Naive thymus-derived CD4-positive, alpha-beta T cell (primary cell): ENCODE measurements at regions of chr1 and their contacts with region 1.

Region 1: DNA sequence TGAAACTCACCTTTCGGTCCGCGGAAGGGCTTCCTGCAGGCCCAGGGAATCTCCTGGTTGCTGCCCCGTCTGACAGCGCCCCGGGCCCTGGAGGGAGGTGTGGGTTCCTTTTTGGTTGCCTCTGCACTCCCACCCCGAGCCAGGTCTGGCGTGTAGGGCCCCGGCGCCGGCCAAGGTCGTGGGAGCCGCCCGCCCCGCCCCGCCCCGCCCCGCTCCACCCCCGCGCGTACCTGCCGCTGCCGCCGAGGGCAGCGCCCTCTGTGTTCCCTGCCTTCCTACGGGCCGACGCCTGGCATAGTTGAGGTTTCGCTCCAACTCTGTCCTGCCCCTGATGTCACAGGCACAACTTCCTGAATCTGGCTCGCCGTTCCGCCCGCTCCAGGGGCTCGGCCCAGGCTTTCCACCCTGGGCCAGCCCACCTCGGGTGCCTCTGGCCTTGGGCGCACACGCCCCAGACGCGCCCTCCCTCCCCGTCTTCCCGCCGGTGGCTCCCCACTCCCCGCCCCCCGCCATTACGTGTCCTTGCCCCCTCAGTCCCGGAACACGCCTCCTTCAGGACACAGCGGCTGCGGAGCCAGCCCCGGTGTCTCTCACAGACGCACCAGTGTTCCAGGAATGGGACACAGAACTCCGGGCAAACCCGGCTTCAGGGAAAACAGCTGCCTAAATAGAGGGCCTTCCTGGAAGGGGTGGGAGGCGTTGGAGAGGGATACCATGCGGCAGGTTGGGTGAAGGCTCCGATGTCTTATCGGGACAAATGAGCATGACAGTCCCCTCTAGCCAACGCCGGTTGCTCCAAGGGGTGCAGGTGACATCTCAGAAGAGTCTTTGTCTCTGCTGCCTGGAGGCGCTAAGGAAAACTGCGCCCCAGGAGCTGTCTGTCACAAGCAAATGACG is at the start of gene KIAA0040:
- DNase-seq: peak; percentile 25 to 66 (median 40)
- ATAC-seq: peak; percentile 78
- H3K4me3 ChIP-seq: peak within 1 kb of the TSS; percentile 90
- H3K4me3 Mint-ChIP-seq: peak within 1 kb of the TSS; percentile 89 to 100 (median 97)
- H3K27ac ChIP-seq: peak within 1 kb of the TSS; percentile 80
- H3K27ac Mint-ChIP-seq: peak within 1 kb of the TSS; percentile 73 to 97 (median 92)
- H3K4me1 ChIP-seq: peaks cover 38 to 43% of the 10 kb centered on the region in 2 donors
- H3K4me1 Mint-ChIP-seq: peaks cover 40 to 67% (median 53%) of the 10 kb centered on the region in 7 donors
- H3K27me3 ChIP-seq: no peaks in the 10 kb centered on the region
- H3K27me3 Mint-ChIP-seq: no peaks in the 10 kb centered on the region
- total RNA-seq, gene KIAA0040: 21.7 to 88.1 (median 27.0) TPM

Region 2: GRCh38 chr1:174682419-174683008 is 510.4 kb before region 1 on chr1:
- CTCF ChIA-PET with region 1: no interaction called
- POLR2A ChIA-PET with region 1: no interaction called
- intact Hi-C with region 1: no loop called
- DNase-seq: no peak
- ATAC-seq: no peak
- H3K4me3 ChIP-seq: no peak overlapping the region
- H3K4me3 Mint-ChIP-seq: no peak overlapping the region
- H3K27ac ChIP-seq: no peak overlapping the region
- H3K27ac Mint-ChIP-seq: no peak overlapping the region
- H3K4me1 ChIP-seq: no peaks in the 10 kb centered on the region
- H3K4me1 Mint-ChIP-seq: peaks cover 0 to 4% (median 0%) of the 10 kb centered on the region in 7 donors
- H3K27me3 ChIP-seq: no peaks in the 10 kb centered on the region
- H3K27me3 Mint-ChIP-seq: no peaks in the 10 kb centered on the region

Region 3: DNA sequence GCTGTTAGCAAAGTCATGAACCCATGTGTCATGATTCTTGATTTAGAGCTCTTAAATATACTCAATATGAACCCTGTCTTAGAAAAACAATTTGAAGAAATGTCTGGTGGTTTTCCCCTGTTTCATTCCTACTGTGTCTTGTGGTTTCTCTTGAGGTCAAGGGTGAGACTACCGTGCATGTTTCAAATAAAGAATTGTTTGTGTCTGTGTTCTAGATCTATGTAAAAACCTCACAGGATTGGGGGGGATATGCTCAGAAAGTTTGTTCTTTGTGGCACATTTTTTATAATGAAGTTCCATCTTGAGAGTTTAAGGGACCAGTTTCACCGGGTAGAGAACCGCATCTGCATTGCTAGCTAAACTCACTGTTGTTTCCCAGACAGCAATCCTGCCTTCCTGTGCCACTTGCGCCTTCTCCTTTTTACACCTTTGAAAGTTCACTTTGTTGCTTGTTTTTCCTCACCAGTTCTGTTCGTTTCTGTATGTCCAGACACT is 224.1 kb before region 1 on chr1:
- CTCF ChIA-PET with region 1: no interaction called
- POLR2A ChIA-PET with region 1: interaction called, 6 read pairs
- intact Hi-C with region 1: loop called in 1 of 2 experiments (anchors 10 kb)
- DNase-seq: peak in 7 of 9 donors; percentile 74 to 90 (median 85)
- ATAC-seq: peak; percentile 75
- H3K4me3 ChIP-seq: peak overlapping the region; percentile 18
- H3K4me3 Mint-ChIP-seq: peak overlapping the region; percentile 56 to 86 (median 74)
- H3K27ac ChIP-seq: peak overlapping the region; percentile 71
- H3K27ac Mint-ChIP-seq: peak overlapping the region; percentile 87 to 97 (median 92)
- H3K4me1 ChIP-seq: peaks cover 69 to 76% of the 10 kb centered on the region in 2 donors
- H3K4me1 Mint-ChIP-seq: peaks cover 43 to 87% (median 74%) of the 10 kb centered on the region in 7 donors
- H3K27me3 ChIP-seq: no peaks in the 10 kb centered on the region
- H3K27me3 Mint-ChIP-seq: no peaks in the 10 kb centered on the region

Region 4: DNA sequence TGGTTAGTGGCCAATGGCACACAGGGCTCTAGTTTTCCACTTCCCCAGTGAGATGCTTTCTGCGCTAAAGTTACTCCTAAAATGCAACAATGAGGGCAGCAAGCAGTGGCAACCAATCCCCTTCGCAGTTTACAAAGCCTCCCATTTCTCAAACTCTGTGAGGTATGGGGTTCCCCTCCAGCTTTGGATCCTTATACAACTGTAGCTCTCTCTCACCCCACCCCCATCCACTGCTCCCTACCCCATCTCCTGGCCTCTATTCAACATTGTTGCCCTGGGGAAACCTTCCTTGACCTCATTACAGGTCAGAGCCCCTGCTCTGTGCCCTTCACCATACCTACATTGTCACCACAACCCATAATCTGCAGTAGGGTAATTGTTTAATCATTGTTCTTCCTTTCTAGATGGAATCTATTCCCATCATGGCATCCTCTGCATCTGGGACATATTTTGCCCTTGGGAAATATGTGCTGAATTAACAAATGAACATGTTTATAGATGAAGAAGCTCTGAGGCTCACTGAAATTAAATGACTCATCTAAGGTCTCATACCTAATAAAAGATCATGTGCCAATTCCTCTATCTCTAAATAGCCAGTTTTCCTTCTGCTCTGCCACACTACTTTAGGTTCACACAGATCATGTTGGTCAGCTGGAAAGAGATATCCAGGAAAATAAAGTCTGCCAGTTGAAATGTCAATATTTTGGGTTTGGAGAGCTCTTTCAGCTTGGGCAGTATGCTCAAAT is 12.9 kb before region 1 on chr1:
- CTCF ChIA-PET with region 1: interaction called, 5 read pairs
- POLR2A ChIA-PET with region 1: interaction called, 5 read pairs
- intact Hi-C with region 1: loop called in 1 of 2 experiments (anchors 1 kb)
- DNase-seq: no peak
- ATAC-seq: no peak
- H3K4me3 ChIP-seq: no peak overlapping the region
- H3K4me3 Mint-ChIP-seq: peak overlapping the region in 2 of 10 donors; percentile 12 to 42
- H3K27ac ChIP-seq: no peak overlapping the region
- H3K27ac Mint-ChIP-seq: peak overlapping the region in 5 of 9 donors; percentile 18 to 71 (median 62)
- H3K4me1 ChIP-seq: peaks cover 20 to 37% of the 10 kb centered on the region in 2 donors
- H3K4me1 Mint-ChIP-seq: peaks cover 46 to 88% (median 85%) of the 10 kb centered on the region in 7 donors
- H3K27me3 ChIP-seq: no peaks in the 10 kb centered on the region
- H3K27me3 Mint-ChIP-seq: no peaks in the 10 kb centered on the region

Region 5: DNA sequence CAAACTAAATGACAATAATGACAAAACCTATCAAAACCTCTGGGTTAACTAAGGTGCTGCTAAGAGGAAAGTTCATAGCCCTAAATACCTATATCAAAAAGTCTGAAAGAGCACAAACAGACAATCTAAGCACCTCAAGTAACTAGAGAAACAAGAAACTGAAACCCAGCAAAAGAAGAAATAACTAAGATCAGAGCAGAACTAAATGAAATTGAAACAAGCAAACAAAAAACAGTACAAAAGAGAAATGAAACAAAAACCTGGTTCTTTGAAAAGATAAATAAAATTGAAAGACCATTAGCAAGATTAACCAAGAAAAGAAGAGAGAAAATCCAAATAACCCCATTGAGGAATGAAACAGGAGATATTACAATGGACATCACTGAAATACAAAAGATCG is 44.5 kb after region 1 on chr1:
- CTCF ChIA-PET with region 1: no interaction called
- POLR2A ChIA-PET with region 1: no interaction called
- intact Hi-C with region 1: loop called (anchors 1 to 5 kb)
- DNase-seq: no peak
- ATAC-seq: no peak
- H3K4me3 ChIP-seq: no peak overlapping the region
- H3K4me3 Mint-ChIP-seq: peak overlapping the region in 1 of 10 donors; percentile 53
- H3K27ac ChIP-seq: no peak overlapping the region
- H3K27ac Mint-ChIP-seq: peak overlapping the region in 1 of 9 donors; percentile 62
- H3K4me1 ChIP-seq: peaks cover 0 to 12% of the 10 kb centered on the region in 2 donors
- H3K4me1 Mint-ChIP-seq: peaks cover 13 to 35% (median 25%) of the 10 kb centered on the region in 7 donors
- H3K27me3 ChIP-seq: no peaks in the 10 kb centered on the region
- H3K27me3 Mint-ChIP-seq: peaks cover 0 to 4% (median 0%) of the 10 kb centered on the region in 5 donors

Region 6: GRCh38 chr1:175297291-175297690 is 104.4 kb after region 1 on chr1:
- CTCF ChIA-PET with region 1: no interaction called
- POLR2A ChIA-PET with region 1: interaction called, 3 read pairs
- intact Hi-C with region 1: loop called in 1 of 2 experiments (anchors 2 kb)
- DNase-seq: peak in 7 of 9 donors; percentile 39 to 76 (median 68)
- ATAC-seq: peak; percentile 91
- H3K4me3 ChIP-seq: no peak overlapping the region
- H3K4me3 Mint-ChIP-seq: peak overlapping the region in 7 of 10 donors; percentile 32 to 67 (median 46)
- H3K27ac ChIP-seq: no peak overlapping the region
- H3K27ac Mint-ChIP-seq: no peak overlapping the region
- H3K4me1 ChIP-seq: peaks cover 5 to 29% of the 10 kb centered on the region in 2 donors
- H3K4me1 Mint-ChIP-seq: peaks cover 11 to 53% (median 42%) of the 10 kb centered on the region in 7 donors
- H3K27me3 ChIP-seq: no peaks in the 10 kb centered on the region
- H3K27me3 Mint-ChIP-seq: peaks cover 10 to 32% (median 14%) of the 10 kb centered on the region in 5 donors

Region 7: DNA sequence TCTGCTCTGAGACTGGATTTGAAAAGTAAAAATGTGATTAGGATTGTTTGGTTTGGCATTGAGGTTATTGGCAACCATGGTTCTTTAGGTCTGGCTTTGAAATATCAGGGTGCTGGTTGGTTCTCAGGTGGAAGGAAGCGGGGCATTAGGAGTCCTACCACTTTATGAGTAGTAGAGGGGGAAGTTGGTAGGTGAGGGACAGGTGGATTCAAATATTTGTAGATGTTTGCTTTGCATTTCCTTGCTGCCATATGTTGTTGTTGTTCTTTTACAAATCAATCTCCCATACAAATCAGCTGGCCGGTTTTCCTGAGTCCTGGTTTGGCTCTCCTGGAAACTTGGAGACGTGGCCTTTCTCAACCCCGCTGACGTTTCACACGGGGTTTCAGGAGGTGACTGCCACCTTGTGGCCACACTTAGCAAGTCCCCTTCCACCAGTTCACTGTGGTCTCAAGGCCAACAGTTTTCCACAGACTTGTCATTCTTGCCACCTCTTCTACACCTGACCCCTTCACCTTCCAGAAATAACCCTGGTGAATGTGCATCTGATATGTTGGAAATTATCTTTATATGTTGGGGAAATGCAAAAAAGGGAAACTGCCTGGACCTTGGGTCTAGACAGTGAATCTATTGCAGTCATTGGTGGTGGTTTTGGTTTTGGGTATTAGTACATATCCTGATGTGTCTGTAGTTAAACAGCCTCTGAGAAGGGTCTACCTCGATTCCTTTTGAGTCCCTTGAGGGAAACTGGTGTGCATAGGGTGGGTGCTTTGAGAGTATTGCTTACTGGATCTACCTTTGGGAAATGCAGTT is 126.7 kb after region 1 on chr1:
- CTCF ChIA-PET with region 1: interaction called, 3 read pairs
- POLR2A ChIA-PET with region 1: interaction called, 4 read pairs
- intact Hi-C with region 1: loop called (anchors 1 kb)
- DNase-seq: peak; percentile 45 to 71 (median 62)
- ATAC-seq: peak; percentile 91
- H3K4me3 ChIP-seq: no peak overlapping the region
- H3K4me3 Mint-ChIP-seq: peak overlapping the region in 5 of 10 donors; percentile 8 to 44 (median 42)
- H3K27ac ChIP-seq: no peak overlapping the region
- H3K27ac Mint-ChIP-seq: no peak overlapping the region
- H3K4me1 ChIP-seq: peaks cover 4 to 5% of the 10 kb centered on the region in 2 donors
- H3K4me1 Mint-ChIP-seq: peaks cover 4 to 29% (median 18%) of the 10 kb centered on the region in 7 donors
- H3K27me3 ChIP-seq: no peaks in the 10 kb centered on the region
- H3K27me3 Mint-ChIP-seq: peaks cover 0 to 29% (median 5%) of the 10 kb centered on the region in 5 donors

Region 8: DNA sequence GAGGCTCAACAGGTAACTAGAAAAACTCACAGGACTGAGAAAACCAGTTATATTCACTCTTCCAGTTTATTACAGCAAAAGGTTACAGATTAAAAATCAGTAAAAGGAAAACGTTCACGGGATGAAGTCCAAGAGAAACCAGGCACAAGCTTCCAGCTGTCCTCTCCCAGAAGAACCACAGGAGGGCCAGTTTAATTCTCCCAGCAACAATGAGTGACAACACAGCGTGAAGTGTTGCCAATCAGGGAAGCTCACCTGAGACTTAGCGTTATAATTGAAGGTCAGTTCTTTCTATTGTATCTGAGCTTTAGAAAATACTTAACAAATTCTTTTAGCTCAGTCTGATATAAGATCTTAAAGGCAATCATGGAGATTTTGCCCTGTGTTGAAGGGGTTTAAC is 615.7 kb after region 1 on chr1:
- CTCF ChIA-PET with region 1: no interaction called
- POLR2A ChIA-PET with region 1: no interaction called
- intact Hi-C with region 1: no loop called
- DNase-seq: no peak
- ATAC-seq: no peak
- H3K4me3 ChIP-seq: no peak overlapping the region
- H3K4me3 Mint-ChIP-seq: no peak overlapping the region
- H3K27ac ChIP-seq: no peak overlapping the region
- H3K27ac Mint-ChIP-seq: no peak overlapping the region
- H3K4me1 ChIP-seq: no peaks in the 10 kb centered on the region
- H3K4me1 Mint-ChIP-seq: no peaks in the 10 kb centered on the region
- H3K27me3 ChIP-seq: peaks cover 0 to 3% of the 10 kb centered on the region in 2 donors
- H3K27me3 Mint-ChIP-seq: peaks cover 0 to 34% (median 25%) of the 10 kb centered on the region in 5 donors

Region 9: GRCh38 chr1:175968486-175969172 is 775.8 kb after region 1 on chr1:
- CTCF ChIA-PET with region 1: no interaction called
- POLR2A ChIA-PET with region 1: no interaction called
- intact Hi-C with region 1: no loop called
- DNase-seq: no peak
- ATAC-seq: no peak
- H3K4me3 ChIP-seq: no peak overlapping the region
- H3K4me3 Mint-ChIP-seq: no peak overlapping the region
- H3K27ac ChIP-seq: no peak overlapping the region
- H3K27ac Mint-ChIP-seq: no peak overlapping the region
- H3K4me1 ChIP-seq: no peaks in the 10 kb centered on the region
- H3K4me1 Mint-ChIP-seq: peaks cover 0 to 3% (median 0%) of the 10 kb centered on the region in 7 donors
- H3K27me3 ChIP-seq: no peaks in the 10 kb centered on the region
- H3K27me3 Mint-ChIP-seq: no peaks in the 10 kb centered on the region

Region 10: GRCh38 chr1:176206961-176207902 is 1014.4 kb after region 1 on chr1 and contains the start of gene COP1:
- CTCF ChIA-PET with region 1: no interaction called
- POLR2A ChIA-PET with region 1: no interaction called
- intact Hi-C with region 1: loop called in 1 of 2 experiments (anchors 2 kb)
- DNase-seq: peak; percentile 89 to 97 (median 96)
- ATAC-seq: peak; percentile 91
- H3K4me3 ChIP-seq: peak within 1 kb of the TSS; percentile 90
- H3K4me3 Mint-ChIP-seq: peak within 1 kb of the TSS; percentile 81 to 100 (median 98)
- H3K27ac ChIP-seq: peak within 1 kb of the TSS; percentile 81
- H3K27ac Mint-ChIP-seq: peak within 1 kb of the TSS; percentile 93 to 100 (median 97)
- H3K4me1 ChIP-seq: peaks cover 10 to 24% of the 10 kb centered on the region in 2 donors
- H3K4me1 Mint-ChIP-seq: peaks cover 20 to 56% (median 47%) of the 10 kb centered on the region in 7 donors
- H3K27me3 ChIP-seq: no peaks in the 10 kb centered on the region
- H3K27me3 Mint-ChIP-seq: peaks cover 0 to 3% (median 0%) of the 10 kb centered on the region in 5 donors
- total RNA-seq, gene COP1: 39.1 to 57.0 (median 43.9) TPM